ENCODE measurements at regions of chr12 and their contacts with region 1.

Region 1: GRCh38 chr12:47216150-47216677 is 136.5 kb upstream of the AMIGO2 start:
- DNase-seq: peak; percentile 93
- H3K4me3 Mint-ChIP-seq: peak overlapping the region; percentile 96
- H3K27ac Mint-ChIP-seq: peak overlapping the region; percentile 98
- H3K4me1 Mint-ChIP-seq: peaks cover 49% of the 10 kb centered on the region
- H3K27me3 Mint-ChIP-seq: no peaks in the 10 kb centered on the region

Region 2: GRCh38 chr12:45990468-45991283 is 1225.5 kb before region 1 on chr12 and contains the start of gene SCAF11:
- intact Hi-C with region 1: loop called (anchors 2 kb)
- DNase-seq: peak; percentile 100
- H3K4me3 Mint-ChIP-seq: peak within 1 kb of the TSS; percentile 96
- H3K27ac Mint-ChIP-seq: peak within 1 kb of the TSS; percentile 99
- H3K4me1 Mint-ChIP-seq: peaks cover 42% of the 10 kb centered on the region
- H3K27me3 Mint-ChIP-seq: peaks cover 5% of the 10 kb centered on the region
- total RNA-seq, gene SCAF11: 126 and 140 TPM in 2 replicates

Region 3: GRCh38 chr12:47079468-47079980 is 136.7 kb before region 1 on chr12 and contains the starts of genes AMIGO2 and PCED1B:
- intact Hi-C with region 1: loop called (anchors 2 kb)
- DNase-seq: peak; percentile 90
- H3K4me3 Mint-ChIP-seq: peak within 1 kb of the TSS; percentile 98
- H3K27ac Mint-ChIP-seq: peak within 1 kb of the TSS; percentile 99
- H3K4me1 Mint-ChIP-seq: peaks cover 63% of the 10 kb centered on the region
- H3K27me3 Mint-ChIP-seq: no peaks in the 10 kb centered on the region
- total RNA-seq, gene AMIGO2: 13.6 and 14.4 TPM in 2 replicates
- total RNA-seq, gene PCED1B: 51.7 and 55.2 TPM in 2 replicates

Region 4: GRCh38 chr12:47178014-47178413 is 38.2 kb before region 1 on chr12:
- intact Hi-C with region 1: no loop called
- DNase-seq: no peak
- H3K4me3 Mint-ChIP-seq: no peak overlapping the region
- H3K27ac Mint-ChIP-seq: peak overlapping the region; percentile 29
- H3K4me1 Mint-ChIP-seq: peaks cover 6% of the 10 kb centered on the region
- H3K27me3 Mint-ChIP-seq: no peaks in the 10 kb centered on the region

Region 5: GRCh38 chr12:47236109-47236714 is 20.0 kb after region 1 on chr12:
- intact Hi-C with region 1: no loop called
- DNase-seq: no peak
- H3K4me3 Mint-ChIP-seq: peak overlapping the region; percentile 12
- H3K27ac Mint-ChIP-seq: peak overlapping the region; percentile 52
- H3K4me1 Mint-ChIP-seq: peaks cover 35% of the 10 kb centered on the region
- H3K27me3 Mint-ChIP-seq: no peaks in the 10 kb centered on the region

Region 6: DNA sequence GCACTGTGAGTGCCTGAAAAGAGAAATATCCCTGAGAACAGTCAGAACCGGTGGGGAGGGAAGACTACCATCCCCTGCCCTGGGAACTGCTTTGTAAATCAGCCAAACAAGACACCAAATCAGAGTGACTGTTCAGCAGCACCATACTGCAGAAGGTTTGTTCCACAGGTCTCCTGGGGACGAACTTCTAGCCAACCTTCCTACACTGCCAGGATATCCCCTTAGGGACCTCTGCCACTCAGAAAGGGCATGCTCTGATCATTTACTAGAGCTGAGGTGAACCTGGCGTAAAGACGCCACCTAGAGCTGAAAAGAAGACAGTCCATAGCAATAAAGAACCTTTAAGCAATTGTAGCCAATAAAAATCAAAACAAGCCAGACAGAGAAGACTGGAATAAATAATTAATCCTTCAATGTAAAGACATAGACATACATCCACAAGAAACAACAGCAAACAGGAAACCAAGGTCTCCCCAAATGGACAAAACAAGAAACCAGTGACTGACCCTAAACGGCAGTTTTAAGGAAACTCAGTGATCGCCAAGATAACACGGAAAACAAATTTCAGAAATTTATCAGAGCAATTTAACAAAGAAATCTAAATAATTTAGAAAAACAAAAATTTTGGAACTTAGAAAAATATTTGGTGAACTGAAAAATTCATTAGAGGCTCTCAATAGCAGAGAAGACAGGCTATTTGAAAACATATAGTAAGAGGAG is 91.6 kb after region 1 on chr12:
- intact Hi-C with region 1: loop called (anchors 1 kb)
- DNase-seq: peak; percentile 88
- H3K4me3 Mint-ChIP-seq: peak overlapping the region; percentile 88
- H3K27ac Mint-ChIP-seq: peak overlapping the region; percentile 88
- H3K4me1 Mint-ChIP-seq: peaks cover 51% of the 10 kb centered on the region
- H3K27me3 Mint-ChIP-seq: no peaks in the 10 kb centered on the region

Region 7: GRCh38 chr12:47397664-47398281 is 181.6 kb after region 1 on chr12:
- intact Hi-C with region 1: loop called (anchors 1 kb)
- DNase-seq: peak; percentile 84
- H3K4me3 Mint-ChIP-seq: peak overlapping the region; percentile 59
- H3K27ac Mint-ChIP-seq: peak overlapping the region; percentile 99
- H3K4me1 Mint-ChIP-seq: peaks cover 79% of the 10 kb centered on the region
- H3K27me3 Mint-ChIP-seq: no peaks in the 10 kb centered on the region

Region 8: GRCh38 chr12:47481041-47481440 is 264.8 kb after region 1 on chr12:
- intact Hi-C with region 1: no loop called
- DNase-seq: no peak
- H3K4me3 Mint-ChIP-seq: no peak overlapping the region
- H3K27ac Mint-ChIP-seq: no peak overlapping the region
- H3K4me1 Mint-ChIP-seq: no peaks in the 10 kb centered on the region
- H3K27me3 Mint-ChIP-seq: peaks cover 5% of the 10 kb centered on the region

Region 9: GRCh38 chr12:48105862-48106680 is 889.9 kb after region 1 on chr12 and contains the start of gene SENP1:
- intact Hi-C with region 1: loop called (anchors 2 kb)
- DNase-seq: peak; percentile 97
- H3K4me3 Mint-ChIP-seq: peak within 1 kb of the TSS; percentile 97
- H3K27ac Mint-ChIP-seq: peak within 1 kb of the TSS; percentile 95
- H3K4me1 Mint-ChIP-seq: peaks cover 39% of the 10 kb centered on the region
- H3K27me3 Mint-ChIP-seq: peaks cover 6% of the 10 kb centered on the region
- total RNA-seq, gene SENP1: 55.4 and 58.6 TPM in 2 replicates